HCT116 (cell line): ENCODE measurements at regions of chr11 and their contacts with region 1.

Region 1: GRCh38 chr11:29333993-29334775 is 682.6 kb downstream of the KCNA4 start:
- DNase-seq: peak; percentile 29
- ATAC-seq: peak; percentile 88
- H3K4me3 ChIP-seq: no peak overlapping the region
- H3K27ac ChIP-seq: no peak overlapping the region
- H3K4me1 ChIP-seq: peaks cover 0 to 2% of the 10 kb centered on the region in 2 experiments; a peak in 1 of 4 replicates
- H3K27me3 ChIP-seq: no peaks in the 10 kb centered on the region
- CTCF ChIP-seq: peak; percentile 40 to 60 (median 55); a peak in 4 of 6 replicates
- POLR2A ChIP-seq: no peak
- RAD21 ChIP-seq: peak; percentile 82

Region 2: GRCh38 chr11:27506200-27507182 is 1827.7 kb before region 1 on chr11 and contains the start of gene LIN7C:
- CTCF ChIA-PET with region 1: no interaction called
- POLR2A ChIA-PET with region 1: no interaction called
- RAD21 ChIA-PET with region 1: no interaction called
- intact Hi-C with region 1: loop called (anchors 5 kb)
- DNase-seq: peak; percentile 89
- ATAC-seq: peak; percentile 96
- H3K4me3 ChIP-seq: peak within 1 kb of the TSS; percentile 89 to 94
- H3K27ac ChIP-seq: peak within 1 kb of the TSS; percentile 76
- H3K4me1 ChIP-seq: peaks cover 5 to 16% of the 10 kb centered on the region in 2 experiments; a peak in 3 of 4 replicates
- H3K27me3 ChIP-seq: no peaks in the 10 kb centered on the region
- CTCF ChIP-seq: no peak
- POLR2A ChIP-seq: peak; percentile 92
- RAD21 ChIP-seq: no peak
- total RNA-seq, gene LIN7C: 48.2 TPM

Region 3: DNA sequence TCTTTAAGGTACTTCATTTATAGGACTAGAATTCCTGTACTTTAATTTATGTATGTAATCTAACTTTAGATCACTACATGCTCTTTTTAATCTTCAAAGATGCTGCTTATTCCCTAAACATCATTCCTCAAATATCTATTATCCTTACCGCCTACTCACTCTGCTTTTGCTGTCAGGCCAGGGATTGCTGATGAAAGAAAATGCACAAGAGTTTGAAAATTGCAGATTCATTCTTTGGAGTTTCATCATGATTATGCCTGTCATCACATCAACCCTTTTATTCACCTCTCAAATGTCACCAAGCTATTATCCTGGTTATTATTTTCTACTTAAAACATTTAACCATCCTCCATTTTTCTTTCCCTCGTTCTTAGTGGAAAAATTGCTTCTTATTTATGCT is 423.3 kb before region 1 on chr11:
- CTCF ChIA-PET with region 1: no interaction called
- POLR2A ChIA-PET with region 1: no interaction called
- RAD21 ChIA-PET with region 1: no interaction called
- intact Hi-C with region 1: no loop called
- DNase-seq: no peak
- ATAC-seq: no peak
- H3K4me3 ChIP-seq: no peak overlapping the region
- H3K27ac ChIP-seq: no peak overlapping the region
- H3K4me1 ChIP-seq: no peaks in the 10 kb centered on the region
- H3K27me3 ChIP-seq: no peaks in the 10 kb centered on the region
- CTCF ChIP-seq: no peak
- POLR2A ChIP-seq: no peak
- RAD21 ChIP-seq: no peak

Region 4: GRCh38 chr11:29734287-29734686 is 400.1 kb after region 1 on chr11:
- CTCF ChIA-PET with region 1: no interaction called
- POLR2A ChIA-PET with region 1: no interaction called
- RAD21 ChIA-PET with region 1: no interaction called
- intact Hi-C with region 1: no loop called
- DNase-seq: no peak
- ATAC-seq: no peak
- H3K4me3 ChIP-seq: no peak overlapping the region
- H3K27ac ChIP-seq: no peak overlapping the region
- H3K4me1 ChIP-seq: no peaks in the 10 kb centered on the region
- H3K27me3 ChIP-seq: no peaks in the 10 kb centered on the region
- CTCF ChIP-seq: no peak
- POLR2A ChIP-seq: no peak
- RAD21 ChIP-seq: no peak

Region 5: DNA sequence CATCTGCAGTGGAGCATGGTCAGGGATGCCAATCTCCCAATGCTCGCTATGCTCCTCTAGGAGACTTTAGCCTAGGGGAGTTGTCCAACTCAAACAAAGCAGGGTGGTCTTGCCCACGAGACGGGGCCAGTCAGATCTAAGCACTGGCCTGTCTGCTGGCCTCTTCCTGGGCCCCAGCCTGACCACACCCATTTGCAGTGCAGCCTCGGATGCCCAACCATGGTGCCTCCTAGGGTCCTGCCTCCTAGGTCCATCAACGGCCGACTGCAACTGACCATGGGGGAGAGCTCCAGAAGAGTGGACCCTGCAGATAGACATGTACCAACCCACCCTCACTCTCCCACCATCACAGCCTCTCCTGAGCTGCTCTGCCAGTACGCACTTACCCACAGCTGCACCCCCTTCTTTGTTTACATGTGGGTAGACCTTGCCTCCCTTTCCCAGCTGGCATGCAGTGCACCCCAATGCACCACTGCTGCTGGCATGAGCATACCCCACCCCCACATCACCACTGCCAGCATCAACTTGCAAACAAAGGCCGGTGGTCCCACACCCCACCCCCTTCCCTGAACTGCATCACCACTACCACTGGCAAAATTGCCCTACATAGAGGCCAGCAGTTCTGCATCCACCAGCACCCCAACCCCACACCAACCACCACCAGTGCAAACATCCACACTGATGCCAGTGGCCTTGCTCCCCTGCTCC is 961.1 kb after region 1 on chr11:
- CTCF ChIA-PET with region 1: no interaction called
- POLR2A ChIA-PET with region 1: no interaction called
- RAD21 ChIA-PET with region 1: no interaction called
- intact Hi-C with region 1: no loop called
- DNase-seq: no peak
- ATAC-seq: no peak
- H3K4me3 ChIP-seq: no peak overlapping the region
- H3K27ac ChIP-seq: no peak overlapping the region
- H3K4me1 ChIP-seq: no peaks in the 10 kb centered on the region
- H3K27me3 ChIP-seq: peaks cover 19% of the 10 kb centered on the region; the same call in 1 of the 2 replicates
- CTCF ChIP-seq: no peak
- POLR2A ChIP-seq: no peak
- RAD21 ChIP-seq: no peak